Dendritic cell treated with granulocyte-macrophage colony-stimulating factor and Interleukin-4, amounts not matched to agents 40 ng/mL and 50 ng/mL, for 4 days (primary cell): ENCODE measurements at regions of chr12 and their contacts with region 1.

Region 1: GRCh38 chr12:75511116-75512048 is at the start of gene KRR1:
- H3K4me3 Mint-ChIP-seq: peak within 1 kb of the TSS; percentile 94
- H3K27ac Mint-ChIP-seq: peak within 1 kb of the TSS; percentile 96
- H3K4me1 Mint-ChIP-seq: peaks cover 15% of the 10 kb centered on the region
- H3K27me3 Mint-ChIP-seq: peaks cover 1% of the 10 kb centered on the region

Region 2: DNA sequence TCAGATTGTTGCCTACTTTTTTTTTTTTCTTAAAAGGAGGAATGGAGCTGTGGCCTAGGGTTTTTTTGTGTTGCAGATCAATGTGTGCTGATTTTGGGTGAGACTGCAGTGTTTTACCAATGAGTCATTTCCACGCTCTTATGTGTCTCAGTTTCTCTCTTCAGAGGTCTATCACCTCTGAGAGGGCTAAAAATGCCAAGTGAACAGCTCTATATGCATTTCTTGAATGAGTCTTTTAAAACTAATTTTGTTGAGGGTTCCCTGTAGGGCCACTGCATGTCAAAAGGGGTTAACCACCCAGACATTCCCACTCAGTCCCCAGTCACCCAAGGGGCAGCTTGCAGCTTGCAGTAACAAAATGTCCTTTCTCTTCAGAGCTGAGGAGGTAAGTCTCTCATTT is 144.8 kb before region 1 on chr12:
- intact Hi-C with region 1: no loop called
- H3K4me3 Mint-ChIP-seq: no peak overlapping the region
- H3K27ac Mint-ChIP-seq: no peak overlapping the region
- H3K4me1 Mint-ChIP-seq: peaks cover 11% of the 10 kb centered on the region
- H3K27me3 Mint-ChIP-seq: no peaks in the 10 kb centered on the region

Region 3: DNA sequence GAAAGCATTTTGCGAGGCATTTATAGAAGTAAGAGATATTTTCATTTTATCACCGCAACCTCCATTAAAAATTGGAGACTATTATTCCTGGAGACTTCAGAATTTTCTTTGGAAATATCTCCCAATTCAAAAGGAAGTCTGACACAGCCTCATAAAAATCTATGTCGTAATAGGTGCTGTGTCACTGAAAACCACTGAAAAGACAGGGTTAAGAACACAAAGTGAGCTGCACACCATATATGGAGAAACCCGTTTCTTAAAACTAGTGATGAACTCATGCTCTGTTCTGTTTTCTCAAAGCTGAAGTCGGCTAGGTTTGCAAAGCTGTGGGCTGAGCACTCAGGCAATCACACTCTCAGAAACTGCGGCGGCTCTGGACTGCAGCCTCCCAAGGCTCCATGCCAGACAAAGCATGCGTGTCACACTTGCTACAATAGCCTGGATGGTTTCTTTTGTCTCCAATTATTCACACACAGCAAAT is 30.9 kb before region 1 on chr12 and contains the start of gene GLIPR1:
- intact Hi-C with region 1: loop called (anchors 2 kb)
- H3K4me3 Mint-ChIP-seq: peak within 1 kb of the TSS; percentile 84
- H3K27ac Mint-ChIP-seq: peak within 1 kb of the TSS; percentile 88
- H3K4me1 Mint-ChIP-seq: peaks cover 45% of the 10 kb centered on the region
- H3K27me3 Mint-ChIP-seq: no peaks in the 10 kb centered on the region

Region 4: GRCh38 chr12:75954041-75954440 is 442.7 kb after region 1 on chr12:
- intact Hi-C with region 1: no loop called
- H3K4me3 Mint-ChIP-seq: no peak overlapping the region
- H3K27ac Mint-ChIP-seq: no peak overlapping the region
- H3K4me1 Mint-ChIP-seq: peaks cover 17% of the 10 kb centered on the region
- H3K27me3 Mint-ChIP-seq: peaks cover 4% of the 10 kb centered on the region

Region 5: DNA sequence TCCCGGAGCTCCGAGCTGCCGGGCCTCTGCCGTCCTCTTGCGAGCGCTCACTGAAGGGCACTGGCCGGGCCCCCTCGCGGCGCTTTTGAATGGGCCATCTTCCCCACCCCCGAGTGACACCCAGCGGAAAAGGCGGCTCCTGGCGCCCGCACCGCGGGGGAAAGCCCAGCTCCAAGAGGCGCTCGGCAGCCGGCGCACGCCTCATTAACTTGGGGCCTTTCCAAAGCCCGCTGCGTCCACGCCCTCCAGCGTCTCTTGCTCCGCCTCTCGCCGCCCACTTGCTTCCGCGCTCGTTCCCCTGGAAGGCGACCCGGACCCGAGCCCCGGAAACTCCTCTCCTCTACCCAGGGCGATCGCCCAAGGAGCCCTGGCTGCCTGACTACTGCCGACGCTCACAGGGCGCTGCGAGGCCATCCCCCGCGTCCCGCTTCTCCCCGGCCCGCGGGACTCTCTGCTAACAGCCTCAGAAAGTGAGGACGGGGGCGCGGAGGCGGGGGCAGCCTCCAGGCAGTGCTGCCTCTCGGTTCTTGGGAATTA is 520.2 kb after region 1 on chr12 and contains the start of gene PHLDA1:
- intact Hi-C with region 1: loop called (anchors 5 kb)
- H3K4me3 Mint-ChIP-seq: peak within 1 kb of the TSS; percentile 99
- H3K27ac Mint-ChIP-seq: peak within 1 kb of the TSS; percentile 95
- H3K4me1 Mint-ChIP-seq: peaks cover 32% of the 10 kb centered on the region
- H3K27me3 Mint-ChIP-seq: peaks cover 20% of the 10 kb centered on the region

Region 6: GRCh38 chr12:76083904-76084862 is 572.8 kb after region 1 on chr12 and contains the start of gene NAP1L1:
- intact Hi-C with region 1: loop called (anchors 1 kb)
- H3K4me3 Mint-ChIP-seq: peak within 1 kb of the TSS; percentile 92
- H3K27ac Mint-ChIP-seq: peak within 1 kb of the TSS; percentile 99
- H3K4me1 Mint-ChIP-seq: peaks cover 35% of the 10 kb centered on the region
- H3K27me3 Mint-ChIP-seq: no peaks in the 10 kb centered on the region

Region 7: GRCh38 chr12:76763743-76764675 is 1252.6 kb after region 1 on chr12 and contains the start of gene ZDHHC17:
- intact Hi-C with region 1: loop called (anchors 10 kb)
- H3K4me3 Mint-ChIP-seq: peak within 1 kb of the TSS; percentile 94
- H3K27ac Mint-ChIP-seq: peak within 1 kb of the TSS; percentile 98
- H3K4me1 Mint-ChIP-seq: peaks cover 47% of the 10 kb centered on the region
- H3K27me3 Mint-ChIP-seq: no peaks in the 10 kb centered on the region